K562 (cell line): ENCODE measurements at regions of chr18 and their contacts with region 1.

Region 1: GRCh38 chr18:2948038-2948437 is 64.9 kb downstream of the LPIN2 start:
- DNase-seq: peak; percentile 18 to 40 (median 32)
- ATAC-seq: peak; percentile 59; the same call in 2 of the 3 replicates
- H3K4me3 ChIP-seq: no peak overlapping the region
- H3K27ac ChIP-seq: no peak overlapping the region
- H3K4me1 ChIP-seq: no peaks in the 10 kb centered on the region
- H3K27me3 ChIP-seq: no peaks in the 10 kb centered on the region
- CTCF ChIP-seq: peak in 2 of 3 experiments; percentile 37 to 51; a peak in 2 of 6 replicates
- EP300 ChIP-seq: no peak
- POLR2A ChIP-seq: no peak
- RAD21 ChIP-seq: peak; percentile 25 to 37; a peak in 1 of 4 replicates

Region 2: DNA sequence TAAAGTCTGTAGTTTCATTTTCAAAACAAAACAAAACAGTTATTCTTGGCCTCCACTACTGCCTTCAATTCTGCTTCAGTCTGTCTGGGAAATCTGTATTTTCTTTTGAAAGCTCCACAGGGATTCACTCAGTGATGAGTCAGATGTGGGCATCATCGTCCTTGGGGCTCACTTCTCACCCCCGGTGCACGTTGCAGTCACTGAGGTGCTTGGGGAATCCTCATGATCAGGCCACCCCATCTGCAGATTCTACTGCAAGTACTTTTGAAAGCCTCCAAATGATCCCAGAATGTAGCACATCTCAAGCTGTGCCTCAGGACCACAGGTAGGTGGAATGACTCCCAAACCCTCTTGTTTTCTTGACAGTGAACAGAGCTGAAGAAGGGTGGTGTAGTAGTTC is 30.6 kb after region 1 on chr18:
- CTCF ChIA-PET with region 1: no interaction called
- POLR2A ChIA-PET with region 1: interaction called, 3 read pairs
- in situ Hi-C with region 1: no loop called
- intact Hi-C with region 1: loop called (anchors 5 kb)
- DNase-seq: no peak
- ATAC-seq: no peak
- H3K4me3 ChIP-seq: no peak overlapping the region
- H3K27ac ChIP-seq: no peak overlapping the region
- H3K4me1 ChIP-seq: peaks cover 6 to 54% of the 10 kb centered on the region in 2 experiments; a peak in 4 of 5 replicates
- H3K27me3 ChIP-seq: no peaks in the 10 kb centered on the region
- CTCF ChIP-seq: no peak
- EP300 ChIP-seq: no peak
- POLR2A ChIP-seq: no peak
- RAD21 ChIP-seq: no peak